Uterus (tissue), 4 donors: ENCODE measurements at regions of chr1 and their contacts with region 1.

Region 1: DNA sequence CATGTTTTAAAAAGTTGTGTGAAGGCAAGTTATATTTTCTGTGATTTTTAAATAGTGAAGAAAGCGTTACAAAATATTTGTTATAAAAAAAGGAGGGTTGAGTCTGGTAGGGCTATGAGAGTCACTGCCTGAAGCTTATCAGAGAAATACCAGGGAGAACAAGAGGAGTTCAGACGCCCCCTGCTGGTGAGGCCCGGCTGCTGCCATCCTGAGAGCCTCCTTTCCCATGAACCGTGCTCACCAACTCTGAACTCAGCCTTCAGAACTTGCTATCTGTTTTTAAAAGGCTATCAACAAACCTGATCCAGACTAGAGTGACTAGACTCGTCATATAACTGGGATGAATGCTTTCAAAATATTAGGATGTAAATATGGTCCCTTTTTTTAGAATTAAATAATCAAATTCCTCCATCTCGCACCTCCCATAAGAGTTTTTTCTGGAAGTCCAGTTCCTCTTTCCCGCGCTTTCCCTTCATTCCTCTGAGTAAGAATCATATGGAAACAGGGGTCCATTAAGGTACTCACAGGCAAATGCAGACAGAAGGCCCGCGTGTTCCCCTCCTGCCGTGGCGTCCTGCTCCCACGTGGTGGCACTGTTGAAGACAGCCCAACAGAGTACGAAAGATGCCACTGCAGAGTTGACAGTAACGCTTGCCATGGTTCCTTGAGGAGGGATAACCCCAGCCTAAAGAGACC is 26.2 kb upstream of the SPATA6 start:
- DNase-seq: peak; percentile 75 to 76
- H3K4me3 ChIP-seq: no peak overlapping the region
- H3K27ac ChIP-seq: no peak overlapping the region
- H3K4me1 ChIP-seq: no peaks in the 10 kb centered on the region
- H3K27me3 ChIP-seq: no peaks in the 10 kb centered on the region
- CTCF ChIP-seq: peak; percentile 75 to 86 (median 82)
- POLR2A ChIP-seq: no peak

Region 2: GRCh38 chr1:48109390-48110013 is 388.7 kb before region 1 on chr1:
- intact Hi-C with region 1: loop called (anchors 10 kb)
- DNase-seq: no peak
- H3K4me3 ChIP-seq: no peak overlapping the region
- H3K27ac ChIP-seq: no peak overlapping the region
- H3K4me1 ChIP-seq: no peaks in the 10 kb centered on the region
- H3K27me3 ChIP-seq: no peaks in the 10 kb centered on the region
- CTCF ChIP-seq: peak; percentile 71 to 81 (median 72)
- POLR2A ChIP-seq: no peak